ENCODE measurements at regions of chr11 and their contacts with region 1.

Region 1: GRCh38 chr11:78094250-78094649 is 14.6 kb upstream of the NDUFC2 start:
- DNase-seq: no peak
- ATAC-seq: no peak
- H3K4me3 ChIP-seq: no peak overlapping the region
- H3K27ac ChIP-seq: no peak overlapping the region
- H3K4me1 ChIP-seq: no peaks in the 10 kb centered on the region
- H3K27me3 ChIP-seq: no peaks in the 10 kb centered on the region
- CTCF ChIP-seq: no peak
- POLR2A ChIP-seq: no peak
- RAD21 ChIP-seq: no peak

Region 2: DNA sequence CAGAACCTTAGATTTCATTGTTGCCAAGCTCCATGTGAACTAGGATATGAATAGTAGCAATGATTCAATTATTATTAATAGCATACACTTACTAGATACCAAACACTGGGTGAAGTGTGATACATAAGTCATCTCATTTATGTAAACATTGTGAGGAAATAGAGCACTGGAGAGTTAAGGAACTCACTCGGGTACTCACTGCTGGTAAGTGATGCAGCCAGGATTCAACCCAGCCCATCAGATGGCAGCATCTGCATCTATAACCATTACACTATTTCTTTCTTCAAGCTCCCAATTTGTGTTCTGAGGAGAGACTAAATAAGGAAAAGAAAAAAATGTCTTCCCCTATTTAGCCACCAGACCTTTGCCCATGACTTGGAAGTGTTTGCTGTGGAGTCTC is 55.4 kb after region 1 on chr11:
- CTCF ChIA-PET with region 1: no interaction called
- POLR2A ChIA-PET with region 1: interaction called, 15 read pairs
- dilution Hi-C with region 1: no loop called
- in situ Hi-C with region 1: no loop called
- intact Hi-C with region 1: no loop called
- DNase-seq: peak; percentile 87
- ATAC-seq: peak; percentile 98
- H3K4me3 ChIP-seq: no peak overlapping the region
- H3K27ac ChIP-seq: no peak overlapping the region
- H3K4me1 ChIP-seq: no peaks in the 10 kb centered on the region
- H3K27me3 ChIP-seq: no peaks in the 10 kb centered on the region
- CTCF ChIP-seq: peak; percentile 64
- POLR2A ChIP-seq: no peak
- RAD21 ChIP-seq: peak; percentile 71